HepG2 (cell line): ENCODE measurements at regions of chr5 and their contacts with region 1.

Region 1: DNA sequence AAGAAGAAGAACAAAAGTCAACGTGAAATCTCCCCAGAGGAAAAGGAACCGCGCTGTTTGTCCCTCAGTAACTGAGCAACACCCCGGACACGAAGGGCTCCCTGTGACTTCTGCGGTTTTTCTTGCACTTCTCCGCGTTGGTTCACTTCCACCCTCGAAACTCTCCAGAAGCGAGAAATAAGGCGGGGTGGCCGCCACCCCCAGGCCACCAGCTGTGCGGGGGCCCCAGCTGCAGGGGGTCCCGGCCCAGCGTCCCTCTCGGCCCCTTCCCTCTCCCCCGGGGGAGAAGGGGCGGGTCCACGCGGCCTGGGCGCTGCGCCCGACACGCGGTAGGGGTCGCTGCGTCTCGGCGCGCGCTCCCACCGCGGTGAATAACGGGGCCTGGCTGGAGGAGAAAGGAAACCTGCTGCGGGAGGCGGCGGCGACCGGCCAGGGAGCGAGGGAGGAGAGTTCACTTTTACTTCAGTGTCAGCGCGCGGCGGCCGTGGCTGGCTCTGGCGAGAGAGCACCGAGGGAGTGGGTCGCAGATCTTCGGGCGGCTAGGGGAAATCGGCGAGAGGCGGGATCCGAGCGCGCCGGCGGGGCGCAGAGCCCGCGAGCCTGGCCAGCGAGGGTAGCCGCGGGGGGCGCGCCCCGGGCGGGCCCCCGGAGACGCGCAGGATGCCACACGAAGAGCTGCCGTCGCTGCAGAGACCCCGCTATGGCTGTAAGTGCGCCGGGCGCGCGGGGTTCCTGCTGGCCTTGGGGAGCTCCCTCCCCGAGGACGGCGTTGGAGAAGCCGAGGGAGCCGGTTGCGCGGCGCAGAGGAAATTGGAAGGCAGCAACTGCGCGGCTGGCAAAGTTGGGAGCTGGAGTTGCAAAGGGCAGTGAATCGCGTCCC is at the start of gene IQGAP2:
- DNase-seq: peak; percentile 50
- ATAC-seq: peak; percentile 71
- H3K4me3 ChIP-seq: peak within 1 kb of the TSS; percentile 64 to 90 (median 77)
- H3K27ac ChIP-seq: peak within 1 kb of the TSS; percentile 97
- H3K4me1 ChIP-seq: peaks cover 61% of the 10 kb centered on the region
- H3K27me3 ChIP-seq: no peaks in the 10 kb centered on the region
- CTCF ChIP-seq: peak; percentile 96
- EP300 ChIP-seq: 0 out of 4 replicates have a peak, but pooled peaks of 1 of the 2 experiments have one; percentile 12
- POLR2A ChIP-seq: peak; percentile 61 to 71
- RAD21 ChIP-seq: peak; percentile 89
- total RNA-seq, gene IQGAP2: 83.3 and 143 TPM in 2 replicates

Region 2: GRCh38 chr5:76319673-76320072 is 83.5 kb before region 1 on chr5:
- CTCF ChIA-PET with region 1: no interaction called
- POLR2A ChIA-PET with region 1: no interaction called
- in situ Hi-C with region 1: no loop called
- intact Hi-C with region 1: no loop called
- DNase-seq: no peak
- ATAC-seq: no peak
- H3K4me3 ChIP-seq: no peak overlapping the region
- H3K27ac ChIP-seq: no peak overlapping the region
- H3K4me1 ChIP-seq: peaks cover 4% of the 10 kb centered on the region; the same call in 1 of the 2 replicates
- H3K27me3 ChIP-seq: no peaks in the 10 kb centered on the region
- CTCF ChIP-seq: no peak
- EP300 ChIP-seq: no peak
- POLR2A ChIP-seq: no peak
- RAD21 ChIP-seq: no peak

Region 3: GRCh38 chr5:76337953-76338451 is 65.1 kb before region 1 on chr5:
- CTCF ChIA-PET with region 1: interaction called, 5 read pairs
- POLR2A ChIA-PET with region 1: no interaction called
- in situ Hi-C with region 1: no loop called
- intact Hi-C with region 1: loop called (anchors 1 kb)
- DNase-seq: peak; percentile 60
- ATAC-seq: peak; percentile 88
- H3K4me3 ChIP-seq: no peak overlapping the region
- H3K27ac ChIP-seq: no peak overlapping the region
- H3K4me1 ChIP-seq: peaks cover 28% of the 10 kb centered on the region
- H3K27me3 ChIP-seq: no peaks in the 10 kb centered on the region
- CTCF ChIP-seq: peak; percentile 71
- EP300 ChIP-seq: no peak
- POLR2A ChIP-seq: no peak
- RAD21 ChIP-seq: peak; percentile 45; the same call in 1 of the 2 replicates

Region 4: DNA sequence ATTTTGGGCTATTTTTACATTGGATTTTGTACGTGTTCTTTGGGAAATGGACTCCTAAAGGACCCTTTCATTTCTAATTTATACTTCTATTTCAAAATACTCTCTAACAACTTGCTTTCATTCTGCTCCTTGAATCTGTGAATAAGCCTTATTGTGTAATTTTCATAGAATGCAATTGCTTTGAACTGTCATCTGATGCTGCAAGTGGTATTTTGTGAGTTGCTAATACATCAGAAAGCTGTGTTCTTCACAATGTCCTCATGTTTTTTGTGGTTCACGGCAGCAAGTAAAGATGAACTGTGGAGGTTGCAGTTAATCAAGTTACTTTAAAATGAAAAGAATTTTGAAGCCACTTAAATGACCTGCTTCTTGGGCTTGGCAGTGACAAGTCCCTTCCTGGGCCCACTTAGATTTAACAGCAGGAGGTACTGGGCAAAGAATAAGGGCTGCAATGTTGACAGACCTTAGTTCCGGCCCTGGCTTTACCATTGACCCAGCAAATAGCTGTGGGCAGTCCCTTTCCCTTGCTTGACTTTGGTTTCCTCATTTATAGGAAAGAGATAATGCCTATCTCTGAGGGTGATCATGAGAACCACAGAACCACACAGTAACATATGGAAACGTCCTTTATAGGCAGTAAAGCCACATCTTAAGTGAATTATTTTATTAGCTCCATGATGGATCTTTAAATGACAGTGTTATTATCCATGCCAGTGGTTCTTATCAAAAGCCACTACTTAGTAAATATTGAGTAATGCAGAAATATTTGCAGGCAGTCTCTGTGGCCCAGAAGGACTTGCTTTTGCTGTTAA is 54.8 kb after region 1 on chr5:
- CTCF ChIA-PET with region 1: no interaction called
- POLR2A ChIA-PET with region 1: interaction called, 4 read pairs
- in situ Hi-C with region 1: loop called (anchors 5 kb)
- intact Hi-C with region 1: loop called (anchors 5 kb)
- DNase-seq: peak; percentile 79
- ATAC-seq: peak; percentile 98
- H3K4me3 ChIP-seq: peak overlapping the region in 1 of 3 experiments; percentile 1; a peak in 1 of 6 replicates
- H3K27ac ChIP-seq: peak overlapping the region; percentile 60
- H3K4me1 ChIP-seq: peaks cover 51% of the 10 kb centered on the region
- H3K27me3 ChIP-seq: no peaks in the 10 kb centered on the region; a peak in 1 of 5 replicates
- CTCF ChIP-seq: no peak
- EP300 ChIP-seq: peak in 1 of 2 experiments; percentile 29; a peak in 1 of 4 replicates
- POLR2A ChIP-seq: no peak
- RAD21 ChIP-seq: no peak

Region 5: DNA sequence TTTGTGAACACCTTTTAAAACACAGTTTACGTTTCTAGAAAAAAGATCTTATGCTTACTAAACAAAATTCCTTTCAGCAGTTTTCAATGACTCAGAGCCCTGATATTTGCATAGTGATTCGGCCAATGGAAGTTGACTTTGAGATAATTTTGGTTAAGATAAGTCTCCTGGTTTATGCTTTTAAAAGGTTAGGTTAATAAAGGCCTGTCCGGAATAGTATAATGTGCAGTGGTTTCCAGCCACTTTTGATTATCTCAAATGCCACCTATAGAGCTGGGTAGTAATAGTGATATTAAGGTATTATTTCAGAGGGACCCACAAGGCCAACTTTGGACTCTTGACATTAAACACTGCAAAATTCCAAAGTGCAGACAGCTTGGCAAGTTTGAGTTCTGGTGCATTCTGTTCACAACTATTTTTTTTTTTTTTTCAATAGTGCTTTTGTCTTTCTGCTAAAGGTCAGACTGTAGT is 134.0 kb after region 1 on chr5:
- CTCF ChIA-PET with region 1: interaction called, 3 read pairs
- POLR2A ChIA-PET with region 1: no interaction called
- in situ Hi-C with region 1: loop called (anchors 5 kb)
- intact Hi-C with region 1: loop called (anchors 2 kb)
- DNase-seq: peak; percentile 85
- ATAC-seq: peak; percentile 77
- H3K4me3 ChIP-seq: peak overlapping the region in 2 of 3 experiments; percentile 9 to 14; a peak in 2 of 6 replicates
- H3K27ac ChIP-seq: peak overlapping the region; percentile 76
- H3K4me1 ChIP-seq: peaks cover 71% of the 10 kb centered on the region
- H3K27me3 ChIP-seq: no peaks in the 10 kb centered on the region
- CTCF ChIP-seq: no peak
- EP300 ChIP-seq: peak in 1 of 2 experiments; percentile 57; a peak in 2 of 4 replicates
- POLR2A ChIP-seq: no peak
- RAD21 ChIP-seq: no peak

Region 6: DNA sequence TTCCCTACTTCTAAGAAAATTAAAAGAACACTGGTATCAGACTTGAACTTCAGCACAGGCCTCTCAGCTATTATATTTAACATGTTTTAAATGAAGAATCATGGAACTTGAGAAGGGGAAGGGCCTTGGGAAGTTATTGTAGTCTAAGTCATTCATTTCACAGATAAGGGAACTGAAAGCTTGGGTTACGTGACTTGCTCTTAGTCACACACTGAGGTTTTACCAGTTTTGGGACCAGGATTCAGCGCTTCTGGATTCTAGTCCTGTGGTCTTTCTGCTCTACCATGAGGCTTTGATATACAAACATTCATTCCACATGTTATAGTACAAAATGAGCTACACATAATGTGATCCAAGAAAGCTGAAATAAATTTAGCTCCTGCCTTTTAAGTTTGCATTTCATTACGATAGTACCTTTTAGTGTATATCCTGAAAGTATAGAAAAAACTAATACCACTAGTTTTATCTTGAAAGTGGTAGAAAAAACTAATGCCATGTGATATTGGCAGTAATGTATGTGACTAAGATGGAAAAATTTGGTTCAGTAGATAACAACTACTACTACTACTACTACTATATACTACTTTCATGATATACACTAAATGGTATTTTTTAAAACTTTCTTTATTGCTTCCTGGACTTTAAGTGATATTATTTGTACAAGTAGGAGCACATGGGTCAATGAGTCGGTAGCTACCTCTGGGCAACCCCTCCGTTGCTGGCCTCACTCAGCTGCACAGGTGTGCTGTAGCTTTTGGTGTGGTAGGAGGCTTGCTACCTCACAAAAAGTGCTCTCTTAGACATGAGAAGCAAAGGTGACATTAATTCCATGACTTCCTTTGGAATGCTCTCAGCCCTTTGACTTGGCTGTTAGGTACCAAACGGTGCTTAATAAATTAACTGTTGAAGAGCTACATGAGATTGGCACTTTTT is 179.4 kb after region 1 on chr5:
- CTCF ChIA-PET with region 1: interaction called, 9 read pairs
- POLR2A ChIA-PET with region 1: no interaction called
- in situ Hi-C with region 1: no loop called
- intact Hi-C with region 1: loop called (anchors 5 kb)
- DNase-seq: no peak
- ATAC-seq: no peak
- H3K4me3 ChIP-seq: no peak overlapping the region
- H3K27ac ChIP-seq: no peak overlapping the region
- H3K4me1 ChIP-seq: peaks cover 5% of the 10 kb centered on the region
- H3K27me3 ChIP-seq: no peaks in the 10 kb centered on the region; a peak in 1 of 5 replicates
- CTCF ChIP-seq: no peak
- EP300 ChIP-seq: no peak
- POLR2A ChIP-seq: no peak
- RAD21 ChIP-seq: no peak